ENCODE measurements at regions of chr3 and their contacts with region 1.

Region 1: GRCh38 chr3:47347217-47347801 is 33.5 kb upstream of the PTPN23 start:
- DNase-seq: no peak
- ATAC-seq: peak in 2 of 4 donors; percentile 31 to 56
- H3K4me3 ChIP-seq: no peak overlapping the region
- H3K27ac ChIP-seq: no peak overlapping the region
- H3K4me1 ChIP-seq: peaks cover 0 to 22% (median 0%) of the 10 kb centered on the region in 12 donors
- H3K27me3 ChIP-seq: no peaks in the 10 kb centered on the region
- CTCF ChIP-seq: no peak
- POLR2A ChIP-seq: no peak

Region 2: DNA sequence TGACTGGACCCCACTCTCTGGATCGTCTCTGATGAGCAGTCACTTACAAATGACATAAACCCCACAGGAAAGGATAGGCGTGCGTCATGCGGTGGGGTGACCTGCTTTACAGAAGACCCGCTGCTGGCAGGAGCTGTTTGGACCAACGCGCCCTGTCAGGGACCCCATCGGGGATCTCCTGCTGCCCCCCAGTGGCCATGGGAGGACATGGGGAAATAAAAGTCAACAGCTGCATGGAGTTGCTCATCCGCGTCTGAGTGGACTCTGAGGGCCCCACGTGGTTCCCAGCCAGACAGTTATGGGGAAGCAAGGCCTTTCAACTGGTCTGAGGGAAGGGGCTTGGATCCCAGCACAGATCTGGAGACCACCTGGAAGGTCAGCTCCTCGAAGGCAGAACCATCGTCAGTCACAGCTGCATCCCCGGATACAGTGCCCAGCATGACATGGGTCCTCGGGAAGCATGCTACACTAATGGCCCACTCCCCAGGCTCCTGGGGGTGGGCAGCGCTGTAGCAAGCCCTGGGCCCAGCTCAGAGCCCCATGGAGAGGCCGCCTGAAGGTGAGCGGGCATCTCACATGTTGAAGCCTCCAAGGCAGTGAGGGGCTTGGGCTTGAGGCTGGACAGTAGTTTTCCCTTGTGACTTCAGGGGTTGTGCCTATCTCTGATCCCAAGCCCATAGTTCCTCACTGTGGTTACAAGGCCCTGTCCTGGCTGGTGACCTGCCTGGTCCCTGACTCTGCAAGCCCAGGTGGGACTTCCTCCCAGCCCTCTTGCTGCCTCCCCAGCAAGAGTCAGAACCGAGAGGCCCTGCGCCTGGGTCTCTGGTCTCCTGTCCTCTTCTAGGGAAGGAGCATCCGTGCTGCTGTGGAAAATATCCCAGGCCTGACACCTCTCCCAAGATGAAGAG is 437.5 kb before region 1 on chr3:
- intact Hi-C with region 1: loop called in 1 of 10 experiments (anchors 10 kb)
- DNase-seq: peak; percentile 82 to 91 (median 88)
- ATAC-seq: peak; percentile 68 to 88 (median 82)
- H3K4me3 ChIP-seq: no peak overlapping the region
- H3K27ac ChIP-seq: no peak overlapping the region
- H3K4me1 ChIP-seq: peaks cover 0 to 33% (median 24%) of the 10 kb centered on the region in 12 donors
- H3K27me3 ChIP-seq: no peaks in the 10 kb centered on the region
- CTCF ChIP-seq: peak; percentile 73 to 93 (median 88)
- POLR2A ChIP-seq: no peak